ENCODE measurements at regions of chr3 and their contacts with region 1.

Region 1: GRCh38 chr3:133040696-133041523 is 2.7 kb downstream of the TMEM108 start:
- H3K4me3 ChIP-seq: no peak overlapping the region
- H3K27ac ChIP-seq: no peak overlapping the region
- H3K4me1 ChIP-seq: no peaks in the 10 kb centered on the region
- CTCF ChIP-seq: peak; percentile 62

Region 2: DNA sequence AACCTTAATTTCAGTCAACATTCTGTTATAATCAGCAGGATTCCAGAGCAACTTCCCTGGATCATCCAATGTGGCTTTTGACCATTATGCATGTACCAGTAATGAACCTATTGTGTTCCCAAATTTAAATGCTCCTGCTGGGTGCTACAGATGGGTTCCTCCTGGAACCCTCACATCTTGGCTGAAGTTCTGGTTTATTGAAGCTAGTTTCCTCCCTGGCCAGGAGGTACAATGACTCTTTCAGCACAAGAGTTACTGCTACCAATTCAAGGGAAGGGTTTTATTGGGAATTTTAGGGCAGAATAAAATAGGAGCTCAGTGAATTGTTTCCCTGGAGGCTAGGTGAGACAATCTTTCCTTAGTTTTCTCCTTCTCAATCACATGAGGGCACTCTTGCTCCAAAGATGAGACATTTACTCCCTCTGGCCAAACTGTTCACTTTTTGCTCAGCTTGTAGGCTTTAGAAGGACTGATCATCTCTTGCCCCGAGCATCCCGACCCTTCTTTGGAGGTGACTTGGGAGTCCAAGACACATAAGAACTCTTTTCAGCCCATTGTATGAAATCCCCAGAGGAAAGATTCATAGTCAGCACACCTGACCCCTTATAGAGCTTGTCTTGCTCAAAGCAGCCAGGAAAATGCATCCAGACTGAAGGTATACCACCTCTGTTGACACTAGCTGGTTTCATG is 309.9 kb before region 1 on chr3:
- CTCF ChIA-PET with region 1: interaction called, 30 read pairs
- POLR2A ChIA-PET with region 1: no interaction called
- H3K4me3 ChIP-seq: no peak overlapping the region
- H3K27ac ChIP-seq: no peak overlapping the region
- H3K4me1 ChIP-seq: no peaks in the 10 kb centered on the region
- CTCF ChIP-seq: peak; percentile 43; the same call in 1 of the 2 replicates

Region 3: DNA sequence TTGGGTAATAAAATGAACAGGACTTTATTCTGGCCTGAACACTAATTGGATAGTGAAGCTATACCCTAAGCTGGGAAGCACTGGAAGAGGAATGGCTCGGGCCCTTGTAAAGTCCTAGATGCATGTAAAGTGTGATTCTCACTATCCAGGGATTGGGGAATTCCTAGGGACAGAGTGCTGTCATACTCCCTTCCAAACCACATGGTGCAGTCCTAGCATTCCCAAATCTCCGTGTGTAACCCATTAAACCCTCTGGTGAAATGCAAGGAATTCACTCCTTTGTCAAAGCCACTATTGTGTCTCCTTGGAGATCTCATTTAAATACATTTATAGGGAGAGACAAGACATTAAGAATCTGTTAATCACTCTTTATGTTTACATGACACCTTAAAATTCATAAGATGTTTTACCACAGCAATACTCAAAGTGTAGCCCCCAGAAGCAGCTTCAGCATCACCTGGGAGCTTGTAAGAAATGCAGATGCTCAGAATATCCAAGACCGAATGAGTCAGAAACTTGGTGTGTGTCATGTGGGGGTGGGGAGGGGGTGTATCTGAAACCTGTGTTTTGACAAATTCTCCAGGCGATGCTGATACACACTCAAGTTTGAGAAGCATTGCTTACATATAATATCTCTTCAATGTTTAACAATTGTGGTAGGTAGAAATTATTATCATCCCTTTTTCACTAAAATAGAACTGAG is 196.9 kb before region 1 on chr3:
- CTCF ChIA-PET with region 1: no interaction called
- POLR2A ChIA-PET with region 1: no interaction called
- H3K4me3 ChIP-seq: no peak overlapping the region
- H3K27ac ChIP-seq: no peak overlapping the region
- H3K4me1 ChIP-seq: no peaks in the 10 kb centered on the region
- CTCF ChIP-seq: no peak

Region 4: GRCh38 chr3:133377396-133377795 is 336.5 kb after region 1 on chr3:
- CTCF ChIA-PET with region 1: interaction called, 62 read pairs
- POLR2A ChIA-PET with region 1: no interaction called
- H3K4me3 ChIP-seq: no peak overlapping the region
- H3K27ac ChIP-seq: no peak overlapping the region
- H3K4me1 ChIP-seq: no peaks in the 10 kb centered on the region
- CTCF ChIP-seq: no peak

Region 5: GRCh38 chr3:133384331-133385027 is 343.6 kb after region 1 on chr3:
- CTCF ChIA-PET with region 1: interaction called, 62 read pairs
- POLR2A ChIA-PET with region 1: no interaction called
- H3K4me3 ChIP-seq: no peak overlapping the region
- H3K27ac ChIP-seq: no peak overlapping the region
- H3K4me1 ChIP-seq: no peaks in the 10 kb centered on the region
- CTCF ChIP-seq: peak; percentile 73

Region 6: DNA sequence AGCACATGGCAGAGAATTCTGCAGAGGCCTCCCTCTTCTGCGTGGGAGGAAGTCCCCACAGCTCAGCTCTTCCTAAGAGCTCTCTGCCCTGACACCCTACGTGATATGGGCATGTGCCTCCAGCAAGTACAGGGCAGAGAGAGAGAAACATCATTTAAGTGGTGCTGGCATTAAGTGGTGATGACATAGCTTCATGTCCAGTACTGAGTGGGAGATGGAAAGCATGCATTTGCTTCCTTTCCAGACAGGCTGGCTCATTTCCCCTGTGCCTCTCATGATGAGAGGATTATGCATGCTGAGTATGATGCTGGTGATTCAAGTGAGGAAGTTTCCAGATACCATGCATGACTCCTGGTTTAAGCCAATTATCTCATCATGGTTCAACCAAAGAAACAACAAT is 385.8 kb after region 1 on chr3:
- CTCF ChIA-PET with region 1: interaction called, 10 read pairs
- POLR2A ChIA-PET with region 1: no interaction called
- H3K4me3 ChIP-seq: no peak overlapping the region
- H3K27ac ChIP-seq: no peak overlapping the region
- H3K4me1 ChIP-seq: no peaks in the 10 kb centered on the region
- CTCF ChIP-seq: no peak